ENCODE measurements at regions of chr4 and their contacts with region 1.

Region 1: GRCh38 chr4:124529131-124529530 is 183.4 kb downstream of the ANKRD50 start:
- DNase-seq: no peak
- ATAC-seq: no peak
- H3K4me3 ChIP-seq: no peak overlapping the region
- H3K27ac ChIP-seq: no peak overlapping the region
- H3K4me1 ChIP-seq: no peaks in the 10 kb centered on the region
- H3K27me3 ChIP-seq: no peaks in the 10 kb centered on the region
- CTCF ChIP-seq: no peak

Region 2: GRCh38 chr4:123821861-123822260 is 707.3 kb before region 1 on chr4:
- intact Hi-C with region 1: no loop called
- DNase-seq: no peak
- ATAC-seq: no peak
- H3K4me3 ChIP-seq: no peak overlapping the region
- H3K27ac ChIP-seq: no peak overlapping the region
- H3K4me1 ChIP-seq: peaks cover 0 to 18% (median 11%) of the 10 kb centered on the region in 9 donors
- H3K27me3 ChIP-seq: no peaks in the 10 kb centered on the region
- CTCF ChIP-seq: no peak

Region 3: GRCh38 chr4:124541652-124542420 is 12.7 kb after region 1 on chr4:
- intact Hi-C with region 1: loop called in 1 of 10 experiments (anchors 2 kb)
- DNase-seq: no peak
- ATAC-seq: no peak
- H3K4me3 ChIP-seq: no peak overlapping the region
- H3K27ac ChIP-seq: no peak overlapping the region
- H3K4me1 ChIP-seq: no peaks in the 10 kb centered on the region
- H3K27me3 ChIP-seq: no peaks in the 10 kb centered on the region
- CTCF ChIP-seq: no peak